ENCODE measurements at regions of chrX and their contacts with region 1.

Region 1: DNA sequence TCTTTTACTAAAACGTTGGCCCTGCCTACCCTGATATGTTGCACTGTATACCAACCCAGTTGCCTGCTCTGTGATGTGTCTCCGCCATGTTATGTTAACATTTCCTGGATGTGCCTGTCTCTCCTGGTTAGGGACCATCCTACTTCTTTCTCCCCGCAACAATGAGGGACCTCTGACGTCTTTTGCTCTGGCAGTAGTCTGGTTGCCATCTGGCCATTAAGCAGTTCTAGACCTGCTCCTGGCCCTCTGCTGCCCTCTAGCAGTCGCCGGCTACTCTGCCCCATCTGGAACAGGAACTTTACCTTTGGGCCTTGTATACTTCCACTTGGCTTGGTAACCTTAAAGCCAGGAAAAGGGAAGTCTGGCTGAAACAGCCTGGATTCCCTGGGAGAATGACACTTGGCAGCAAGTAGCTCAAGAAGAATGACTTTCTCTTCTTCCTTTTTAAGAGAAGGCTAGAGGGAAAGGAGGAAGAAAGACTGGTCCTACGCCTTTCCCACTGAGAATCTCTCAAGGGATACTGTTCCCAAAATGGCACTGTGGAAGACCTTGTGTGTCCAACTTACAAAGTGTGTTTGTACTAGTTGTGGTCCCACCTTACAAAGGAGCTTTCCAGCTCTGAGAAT is 63.5 kb downstream of the GPC3 start:
- DNase-seq: peak; percentile 1
- H3K4me3 Mint-ChIP-seq: no peak overlapping the region
- H3K27ac Mint-ChIP-seq: no peak overlapping the region
- H3K4me1 Mint-ChIP-seq: peaks cover 10% of the 10 kb centered on the region
- H3K27me3 Mint-ChIP-seq: peaks cover 7% of the 10 kb centered on the region

Region 2: GRCh38 chrX:133674726-133675494 is 247.0 kb before region 1 on chrX:
- intact Hi-C with region 1: no loop called
- DNase-seq: no peak
- H3K4me3 Mint-ChIP-seq: no peak overlapping the region
- H3K27ac Mint-ChIP-seq: no peak overlapping the region
- H3K4me1 Mint-ChIP-seq: no peaks in the 10 kb centered on the region
- H3K27me3 Mint-ChIP-seq: peaks cover 2% of the 10 kb centered on the region

Region 3: GRCh38 chrX:133985164-133985966 is 63.5 kb after region 1 on chrX and contains the start of gene GPC3:
- intact Hi-C with region 1: loop called (anchors 5 kb)
- DNase-seq: peak; percentile 16
- H3K4me3 Mint-ChIP-seq: peak within 1 kb of the TSS; percentile 65
- H3K27ac Mint-ChIP-seq: no peak within 1 kb of the TSS
- H3K4me1 Mint-ChIP-seq: no peaks in the 10 kb centered on the region
- H3K27me3 Mint-ChIP-seq: peaks cover 25% of the 10 kb centered on the region
- total RNA-seq, gene GPC3: 0.24 and 0.39 TPM in 2 replicates

Region 4: GRCh38 chrX:134004084-134004483 is 82.2 kb after region 1 on chrX:
- intact Hi-C with region 1: no loop called
- DNase-seq: no peak
- H3K4me3 Mint-ChIP-seq: no peak overlapping the region
- H3K27ac Mint-ChIP-seq: no peak overlapping the region
- H3K4me1 Mint-ChIP-seq: no peaks in the 10 kb centered on the region
- H3K27me3 Mint-ChIP-seq: peaks cover 4% of the 10 kb centered on the region

Region 5: DNA sequence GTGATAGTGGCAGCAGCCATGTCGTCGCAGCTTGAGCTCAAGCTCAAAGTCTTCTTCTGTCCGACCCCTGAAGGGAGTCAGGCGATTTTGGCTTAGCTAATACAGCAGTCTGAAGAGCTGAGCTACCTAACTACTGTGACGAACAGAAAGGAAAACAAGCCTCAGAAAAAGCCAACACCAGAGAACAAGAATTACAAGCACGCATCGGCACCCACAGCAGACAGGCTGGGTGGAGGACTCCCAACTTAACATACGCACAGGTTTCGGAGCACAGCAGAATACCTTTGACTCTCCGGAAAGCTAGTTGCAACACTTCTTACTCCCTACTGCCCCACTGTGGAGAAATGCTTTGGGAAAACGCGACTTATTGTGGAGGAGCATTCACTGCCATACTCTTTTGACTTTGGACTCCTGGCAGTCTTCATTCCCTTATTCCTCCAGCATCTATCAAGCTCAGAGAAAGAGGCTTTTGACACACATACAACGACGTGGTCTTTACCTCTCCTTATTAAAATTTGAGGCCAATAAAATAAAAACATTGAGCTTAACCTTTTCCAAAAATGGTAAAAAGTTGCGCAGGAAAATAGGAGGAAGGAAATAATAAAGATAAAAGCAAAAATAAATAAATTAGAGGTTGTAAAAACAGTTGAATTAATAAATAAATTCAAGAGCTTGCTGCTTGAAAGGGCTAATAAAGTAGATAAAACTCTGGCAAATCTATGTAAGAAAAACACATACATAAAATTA is 104.9 kb after region 1 on chrX:
- intact Hi-C with region 1: loop called (anchors 2 kb)
- DNase-seq: peak; percentile 1
- H3K4me3 Mint-ChIP-seq: no peak overlapping the region
- H3K27ac Mint-ChIP-seq: no peak overlapping the region
- H3K4me1 Mint-ChIP-seq: peaks cover 10% of the 10 kb centered on the region
- H3K27me3 Mint-ChIP-seq: peaks cover 3% of the 10 kb centered on the region